ENCODE measurements at regions of chr2 and their contacts with region 1.

Region 1: DNA sequence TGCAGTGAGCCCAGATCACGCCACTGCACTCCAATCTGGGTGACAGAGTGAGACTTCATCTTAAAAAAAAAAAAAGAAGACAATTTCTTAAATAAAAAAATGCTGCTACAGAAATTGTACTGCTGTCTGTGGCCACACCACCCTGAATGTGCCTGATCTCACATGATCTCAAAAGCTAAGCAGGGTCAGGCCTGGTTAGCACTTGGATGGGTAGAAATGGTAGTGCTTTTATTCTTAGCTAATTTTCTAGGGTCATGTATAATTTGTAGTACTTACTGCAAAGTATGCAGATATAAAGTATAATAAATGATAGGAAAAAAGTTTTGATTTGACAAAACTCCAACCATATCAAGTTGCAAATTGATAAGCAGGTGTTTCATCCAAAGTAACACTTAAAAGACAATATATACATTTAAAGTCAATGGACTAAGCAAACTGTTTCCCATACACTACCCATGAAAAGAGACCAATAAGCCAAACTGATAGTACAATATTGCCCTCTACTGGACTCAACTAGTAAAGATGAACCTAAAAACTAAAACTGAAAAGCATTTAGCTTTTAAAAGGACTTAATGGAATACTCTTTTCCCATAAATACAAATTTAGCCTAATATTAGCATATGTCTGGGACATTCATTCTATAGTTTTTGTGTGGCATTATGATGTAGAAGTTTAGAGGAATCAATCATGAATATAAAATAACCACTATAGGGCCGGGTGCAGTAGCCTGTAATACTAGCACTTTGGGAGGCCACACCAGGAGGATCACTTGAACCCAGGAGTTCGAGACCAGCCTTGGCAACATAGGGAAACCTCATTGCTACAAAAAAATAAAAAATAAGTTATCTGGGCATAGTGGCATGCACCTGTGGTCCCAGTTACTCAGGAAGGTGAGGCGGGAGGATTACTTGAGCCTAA is 18.6 kb upstream of the PEX13 start:
- DNase-seq: no peak
- H3K4me3 Mint-ChIP-seq: no peak overlapping the region
- H3K27ac Mint-ChIP-seq: no peak overlapping the region
- H3K4me1 Mint-ChIP-seq: no peaks in the 10 kb centered on the region
- H3K27me3 Mint-ChIP-seq: no peaks in the 10 kb centered on the region

Region 2: DNA sequence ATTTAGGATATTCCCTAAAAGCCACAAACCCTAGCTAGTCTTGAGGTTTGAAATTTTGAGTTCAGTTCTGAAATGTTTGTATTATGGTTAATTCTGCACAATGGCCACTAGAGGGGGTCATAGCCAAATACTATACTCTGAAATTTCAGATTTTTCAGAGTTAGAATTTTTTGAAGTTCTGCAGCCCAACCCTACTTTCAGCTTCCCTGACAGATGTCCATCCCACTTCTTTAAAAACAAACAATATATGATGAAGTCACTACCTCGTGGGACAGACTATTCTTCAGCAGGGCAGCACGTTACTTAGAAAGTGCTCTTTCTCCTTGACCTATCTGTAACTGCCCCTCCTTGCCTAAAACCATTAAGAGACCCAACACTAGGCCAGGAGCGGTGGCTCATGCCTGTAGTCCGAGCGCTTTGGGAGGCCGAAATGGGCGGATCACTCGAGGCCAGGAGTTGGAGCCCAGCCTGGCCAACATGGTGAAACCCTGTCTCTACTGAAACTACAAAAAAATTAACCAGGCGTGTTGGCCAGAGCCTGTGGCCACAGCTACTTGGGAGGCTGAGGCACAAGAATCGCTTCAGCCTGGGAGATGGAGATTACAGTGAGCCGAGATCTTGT is 291.0 kb before region 1 on chr2:
- CTCF ChIA-PET with region 1: interaction called, 136 read pairs
- POLR2A ChIA-PET with region 1: no interaction called
- intact Hi-C with region 1: loop called (anchors 1 kb)
- DNase-seq: no peak
- H3K4me3 Mint-ChIP-seq: no peak overlapping the region
- H3K27ac Mint-ChIP-seq: no peak overlapping the region
- H3K4me1 Mint-ChIP-seq: no peaks in the 10 kb centered on the region
- H3K27me3 Mint-ChIP-seq: peaks cover 1% of the 10 kb centered on the region

Region 3: GRCh38 chr2:60756191-60757041 is 242.5 kb before region 1 on chr2 and contains the start of gene PAPOLG:
- CTCF ChIA-PET with region 1: interaction called, 12 read pairs
- POLR2A ChIA-PET with region 1: no interaction called
- intact Hi-C with region 1: no loop called
- DNase-seq: peak; percentile 98
- H3K4me3 Mint-ChIP-seq: peak within 1 kb of the TSS; percentile 99
- H3K27ac Mint-ChIP-seq: peak within 1 kb of the TSS; percentile 96
- H3K4me1 Mint-ChIP-seq: peaks cover 39% of the 10 kb centered on the region
- H3K27me3 Mint-ChIP-seq: no peaks in the 10 kb centered on the region
- total RNA-seq, gene PAPOLG: 14.4 to 15.7 TPM

Region 4: DNA sequence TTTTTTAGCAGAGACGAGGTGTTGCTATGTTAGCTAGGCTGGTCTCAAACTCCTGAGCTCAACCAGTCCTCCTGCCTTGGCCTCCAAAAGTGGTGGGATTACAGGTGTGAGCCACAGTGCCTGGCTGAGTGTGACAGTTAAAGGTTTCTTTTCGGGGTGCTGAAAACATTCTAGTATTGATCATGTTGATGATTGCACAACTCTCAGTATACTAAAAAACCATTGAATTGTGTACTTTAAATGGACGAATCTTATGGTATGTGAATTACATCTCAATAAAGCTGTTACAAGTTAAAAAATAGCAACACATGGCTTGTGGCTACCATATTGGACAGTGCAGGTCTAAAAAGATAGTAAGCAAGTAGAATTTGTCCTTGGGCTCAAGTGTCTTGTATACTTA is 220.5 kb before region 1 on chr2:
- CTCF ChIA-PET with region 1: interaction called, 12 read pairs
- POLR2A ChIA-PET with region 1: no interaction called
- intact Hi-C with region 1: no loop called
- DNase-seq: no peak
- H3K4me3 Mint-ChIP-seq: no peak overlapping the region
- H3K27ac Mint-ChIP-seq: no peak overlapping the region
- H3K4me1 Mint-ChIP-seq: no peaks in the 10 kb centered on the region
- H3K27me3 Mint-ChIP-seq: no peaks in the 10 kb centered on the region

Region 5: GRCh38 chr2:60794277-60794863 is 204.5 kb before region 1 on chr2:
- CTCF ChIA-PET with region 1: interaction called, 12 read pairs
- POLR2A ChIA-PET with region 1: no interaction called
- intact Hi-C with region 1: loop called (anchors 1 kb)
- DNase-seq: no peak
- H3K4me3 Mint-ChIP-seq: no peak overlapping the region
- H3K27ac Mint-ChIP-seq: no peak overlapping the region
- H3K4me1 Mint-ChIP-seq: peaks cover 15% of the 10 kb centered on the region
- H3K27me3 Mint-ChIP-seq: no peaks in the 10 kb centered on the region

Region 6: DNA sequence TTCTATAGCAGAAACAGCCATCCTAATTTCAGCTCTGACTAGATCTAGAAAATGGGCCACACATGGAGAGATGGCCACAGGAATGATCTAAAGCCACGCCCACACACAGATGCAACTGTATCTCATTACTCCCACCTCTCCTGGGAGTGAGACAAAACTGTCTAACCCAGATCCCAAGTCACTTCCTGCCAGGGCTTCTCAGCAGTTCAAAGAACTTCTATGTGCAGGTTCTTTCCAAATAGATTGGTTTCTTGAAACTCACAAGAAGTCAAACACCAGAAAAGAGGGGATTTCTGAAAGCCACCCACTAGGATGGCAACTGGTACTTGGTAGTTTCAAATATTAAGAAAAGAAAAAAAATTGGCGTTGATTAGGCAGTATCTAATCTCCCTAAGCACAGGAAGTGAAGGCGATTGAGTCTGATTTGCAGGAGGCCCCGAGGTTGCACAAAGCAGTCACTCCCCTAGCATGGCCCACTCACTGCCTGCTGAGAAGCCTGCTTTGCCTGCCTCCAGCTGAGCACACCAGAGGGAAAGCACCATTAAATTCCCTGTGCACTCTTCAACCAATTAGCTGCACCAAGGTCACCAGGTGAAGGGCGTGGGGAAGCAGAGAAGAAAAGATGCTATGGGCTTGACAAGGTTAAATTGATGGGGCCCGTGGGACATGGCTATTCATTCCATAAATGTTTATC is 191.8 kb before region 1 on chr2:
- CTCF ChIA-PET with region 1: interaction called, 74 read pairs
- POLR2A ChIA-PET with region 1: no interaction called
- intact Hi-C with region 1: loop called (anchors 1 kb)
- DNase-seq: peak; percentile 81
- H3K4me3 Mint-ChIP-seq: peak overlapping the region; percentile 36
- H3K27ac Mint-ChIP-seq: peak overlapping the region; percentile 88
- H3K4me1 Mint-ChIP-seq: peaks cover 49% of the 10 kb centered on the region
- H3K27me3 Mint-ChIP-seq: no peaks in the 10 kb centered on the region

Region 7: GRCh38 chr2:60987041-60987440 is 11.8 kb before region 1 on chr2:
- CTCF ChIA-PET with region 1: interaction called, 17 read pairs
- POLR2A ChIA-PET with region 1: no interaction called
- intact Hi-C with region 1: no loop called
- DNase-seq: no peak
- H3K4me3 Mint-ChIP-seq: no peak overlapping the region
- H3K27ac Mint-ChIP-seq: no peak overlapping the region
- H3K4me1 Mint-ChIP-seq: no peaks in the 10 kb centered on the region
- H3K27me3 Mint-ChIP-seq: no peaks in the 10 kb centered on the region

Region 8: GRCh38 chr2:62309465-62310091 is 1310.7 kb after region 1 on chr2:
- CTCF ChIA-PET with region 1: no interaction called
- POLR2A ChIA-PET with region 1: no interaction called
- intact Hi-C with region 1: no loop called
- DNase-seq: peak; percentile 57
- H3K4me3 Mint-ChIP-seq: peak overlapping the region; percentile 5
- H3K27ac Mint-ChIP-seq: no peak overlapping the region
- H3K4me1 Mint-ChIP-seq: peaks cover 62% of the 10 kb centered on the region
- H3K27me3 Mint-ChIP-seq: no peaks in the 10 kb centered on the region